Posterior vena cava (tissue), 2 donors: ENCODE measurements at regions of chr2 and their contacts with region 1.

Region 1: DNA sequence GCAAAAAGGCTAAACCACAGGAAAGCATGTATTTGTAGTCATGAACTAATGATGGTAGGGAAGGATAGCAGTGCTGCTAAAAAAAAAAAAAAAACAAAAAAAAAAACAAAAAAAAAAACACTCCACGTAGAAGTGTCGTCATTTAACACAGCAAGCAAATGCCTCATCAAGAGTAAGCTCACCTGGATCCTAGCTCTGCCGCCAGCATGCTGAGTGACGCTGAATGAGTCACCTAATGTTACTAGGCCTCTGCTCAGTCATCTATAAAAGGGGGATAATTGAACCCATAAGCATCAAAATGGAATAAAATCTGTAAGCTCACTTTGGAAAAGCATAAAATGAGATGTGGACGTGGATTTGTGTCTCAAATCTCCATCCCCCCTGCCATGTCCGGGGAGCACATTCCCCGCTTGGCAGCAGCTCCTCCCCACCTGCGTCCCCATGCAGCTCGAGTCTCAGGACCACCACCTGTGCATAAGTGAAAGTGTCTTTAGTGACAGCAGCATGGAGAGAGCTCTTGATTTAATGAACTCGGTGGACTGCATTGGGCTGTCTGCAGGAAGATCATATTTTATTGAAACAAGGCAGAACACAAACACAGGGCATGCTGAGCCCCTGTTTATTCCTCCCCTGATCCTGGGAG is 427.5 kb downstream of the LRATD1 start:
- DNase-seq: no peak

Region 2: DNA sequence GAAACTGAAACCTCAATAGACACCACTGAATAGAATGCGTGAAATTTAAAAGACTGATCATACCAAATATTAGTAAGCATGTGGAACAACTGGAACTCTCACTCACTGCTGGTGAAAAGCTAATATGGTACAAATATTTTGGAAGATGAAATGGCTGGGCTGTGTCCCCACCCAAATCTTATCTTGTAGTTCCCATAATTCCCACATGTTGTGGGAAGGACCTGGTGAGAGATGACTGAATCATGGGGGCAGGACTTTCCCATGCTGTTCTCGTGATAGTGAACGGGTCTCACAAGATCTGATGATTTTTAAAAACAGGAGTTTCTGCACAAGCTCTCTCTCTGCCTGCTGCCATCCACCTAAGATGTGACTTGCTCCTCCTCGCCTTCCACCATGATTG is 848.4 kb after region 1 on chr2:
- intact Hi-C with region 1: loop called in 1 of 2 experiments (anchors 5 kb)
- DNase-seq: no peak